Activated CD4-positive, alpha-beta T cell treated with anti-CD3 and anti-CD28 coated beads for 36 hours (primary cell): ENCODE measurements at regions of chr1 and their contacts with region 1.

Region 1: GRCh38 chr1:1115786-1116700 is at the start of gene C1orf159:
- DNase-seq: peak; percentile 99
- ATAC-seq: peak; percentile 96
- H3K4me3 Mint-ChIP-seq: peak within 1 kb of the TSS; percentile 76
- H3K27ac Mint-ChIP-seq: peak within 1 kb of the TSS; percentile 25
- H3K4me1 Mint-ChIP-seq: peaks cover 11% of the 10 kb centered on the region
- H3K27me3 Mint-ChIP-seq: peaks cover 3% of the 10 kb centered on the region
- total RNA-seq, gene C1orf159: 11.3 to 13.5 TPM

Region 2: GRCh38 chr1:1019122-1019999 is 96.7 kb before region 1 on chr1:
- CTCF ChIA-PET with region 1: no interaction called
- POLR2A ChIA-PET with region 1: no interaction called
- intact Hi-C with region 1: loop called in 1 of 2 experiments (anchors 1 kb)
- DNase-seq: peak; percentile 90
- ATAC-seq: peak; percentile 75
- H3K4me3 Mint-ChIP-seq: peak overlapping the region; percentile 59
- H3K27ac Mint-ChIP-seq: no peak overlapping the region
- H3K4me1 Mint-ChIP-seq: peaks cover 15% of the 10 kb centered on the region
- H3K27me3 Mint-ChIP-seq: peaks cover 9% of the 10 kb centered on the region

Region 3: GRCh38 chr1:1069061-1069708 is 46.9 kb before region 1 on chr1:
- CTCF ChIA-PET with region 1: interaction called, 3 read pairs
- POLR2A ChIA-PET with region 1: no interaction called
- intact Hi-C with region 1: loop called (anchors 1 kb)
- DNase-seq: peak; percentile 94
- ATAC-seq: peak; percentile 47
- H3K4me3 Mint-ChIP-seq: peak overlapping the region; percentile 71
- H3K27ac Mint-ChIP-seq: no peak overlapping the region
- H3K4me1 Mint-ChIP-seq: peaks cover 11% of the 10 kb centered on the region
- H3K27me3 Mint-ChIP-seq: no peaks in the 10 kb centered on the region

Region 4: DNA sequence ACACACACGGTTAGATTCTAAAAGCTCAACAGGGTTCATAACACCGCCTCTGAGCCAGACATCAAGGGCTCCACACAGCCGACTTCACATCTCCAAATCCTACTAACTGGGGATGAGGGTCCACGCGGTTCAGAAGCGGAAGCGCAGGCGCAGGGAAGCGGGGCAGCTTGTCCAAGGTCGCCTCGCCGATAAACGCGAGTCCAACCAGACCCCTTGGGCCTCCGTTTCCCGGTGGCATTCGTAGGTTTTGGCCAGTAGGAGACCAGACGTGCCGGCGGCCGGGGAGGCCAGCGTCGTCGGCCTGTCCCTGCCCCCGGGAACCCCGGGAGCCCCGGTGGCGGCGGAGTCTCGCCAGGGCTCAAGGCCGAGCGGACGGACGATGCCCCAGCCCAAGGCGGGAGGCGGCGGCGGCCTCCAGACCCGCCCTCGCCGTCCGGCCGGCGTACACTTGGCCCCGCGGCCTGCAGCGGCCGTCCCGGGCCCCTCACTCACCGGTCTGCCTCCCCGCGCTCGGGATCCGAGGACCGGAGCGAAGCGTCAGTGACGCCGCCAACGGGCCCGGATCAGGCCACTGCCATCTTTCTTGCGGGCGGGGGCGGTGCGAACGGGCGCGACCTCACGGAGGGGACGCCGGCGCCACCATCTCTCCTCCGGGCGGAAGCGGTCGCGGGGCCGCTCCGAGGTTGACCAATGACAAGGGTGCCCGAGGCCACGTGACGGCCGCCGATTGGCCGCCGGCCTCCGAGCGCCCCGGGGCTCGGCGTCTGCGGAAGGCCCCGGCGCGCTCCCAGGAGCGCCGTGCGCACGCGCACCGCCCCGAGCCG is 115.6 kb after region 1 on chr1 and contains the start of gene SDF4:
- CTCF ChIA-PET with region 1: no interaction called
- POLR2A ChIA-PET with region 1: no interaction called
- intact Hi-C with region 1: loop called (anchors 1 to 2 kb)
- DNase-seq: peak; percentile 98
- ATAC-seq: peak; percentile 98
- H3K4me3 Mint-ChIP-seq: peak within 1 kb of the TSS; percentile 94
- H3K27ac Mint-ChIP-seq: peak within 1 kb of the TSS; percentile 91
- H3K4me1 Mint-ChIP-seq: peaks cover 35% of the 10 kb centered on the region
- H3K27me3 Mint-ChIP-seq: no peaks in the 10 kb centered on the region
- total RNA-seq, gene SDF4: 108 to 128 TPM

Region 5: DNA sequence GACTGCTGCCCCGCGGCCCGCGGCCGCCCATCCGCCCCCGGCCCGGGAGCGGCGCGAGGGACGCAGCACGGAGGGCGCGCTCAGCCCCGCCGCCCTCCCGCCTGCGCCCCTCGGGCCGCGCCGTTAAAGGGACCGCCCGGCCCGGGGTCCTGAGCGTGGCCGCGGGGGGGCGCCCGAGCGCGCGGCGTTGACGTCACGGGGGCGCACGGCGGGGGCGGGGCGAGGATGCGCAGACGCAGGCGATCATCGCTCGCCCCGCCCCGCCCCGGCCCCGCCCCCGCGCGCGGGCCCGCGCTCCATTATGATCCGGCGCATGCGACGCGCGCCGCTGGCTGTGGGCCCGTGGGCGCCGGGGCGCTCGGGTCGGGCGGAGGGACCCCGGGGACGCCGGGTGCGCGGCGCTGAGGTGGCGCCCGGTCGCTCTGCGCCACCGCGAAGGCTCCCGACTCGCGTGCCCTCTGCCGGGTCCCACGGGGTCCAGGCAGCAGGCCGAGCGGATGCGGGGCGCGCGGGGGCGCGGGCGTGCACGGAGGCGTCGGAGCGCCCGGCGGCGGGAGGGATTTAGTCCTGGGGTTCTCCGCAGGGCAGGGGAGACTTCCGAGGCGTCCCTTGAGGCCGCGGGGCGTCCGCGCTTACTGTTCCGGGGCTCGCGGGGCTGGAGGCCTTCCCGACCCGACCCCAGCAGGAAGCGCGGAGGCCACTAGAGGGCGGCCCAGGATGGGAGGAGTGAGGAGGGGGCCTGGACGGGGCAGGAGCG is 233.4 kb after region 1 on chr1 and contains the start of gene DVL1:
- CTCF ChIA-PET with region 1: interaction called, 3 read pairs
- POLR2A ChIA-PET with region 1: no interaction called
- intact Hi-C with region 1: loop called in 1 of 2 experiments (anchors 1 kb)
- DNase-seq: peak; percentile 81
- ATAC-seq: peak; percentile 71
- H3K4me3 Mint-ChIP-seq: peak within 1 kb of the TSS; percentile 74
- H3K27ac Mint-ChIP-seq: no peak within 1 kb of the TSS
- H3K4me1 Mint-ChIP-seq: peaks cover 25% of the 10 kb centered on the region
- H3K27me3 Mint-ChIP-seq: peaks cover 11% of the 10 kb centered on the region
- total RNA-seq, gene DVL1: 35.3 to 35.5 TPM

Region 6: DNA sequence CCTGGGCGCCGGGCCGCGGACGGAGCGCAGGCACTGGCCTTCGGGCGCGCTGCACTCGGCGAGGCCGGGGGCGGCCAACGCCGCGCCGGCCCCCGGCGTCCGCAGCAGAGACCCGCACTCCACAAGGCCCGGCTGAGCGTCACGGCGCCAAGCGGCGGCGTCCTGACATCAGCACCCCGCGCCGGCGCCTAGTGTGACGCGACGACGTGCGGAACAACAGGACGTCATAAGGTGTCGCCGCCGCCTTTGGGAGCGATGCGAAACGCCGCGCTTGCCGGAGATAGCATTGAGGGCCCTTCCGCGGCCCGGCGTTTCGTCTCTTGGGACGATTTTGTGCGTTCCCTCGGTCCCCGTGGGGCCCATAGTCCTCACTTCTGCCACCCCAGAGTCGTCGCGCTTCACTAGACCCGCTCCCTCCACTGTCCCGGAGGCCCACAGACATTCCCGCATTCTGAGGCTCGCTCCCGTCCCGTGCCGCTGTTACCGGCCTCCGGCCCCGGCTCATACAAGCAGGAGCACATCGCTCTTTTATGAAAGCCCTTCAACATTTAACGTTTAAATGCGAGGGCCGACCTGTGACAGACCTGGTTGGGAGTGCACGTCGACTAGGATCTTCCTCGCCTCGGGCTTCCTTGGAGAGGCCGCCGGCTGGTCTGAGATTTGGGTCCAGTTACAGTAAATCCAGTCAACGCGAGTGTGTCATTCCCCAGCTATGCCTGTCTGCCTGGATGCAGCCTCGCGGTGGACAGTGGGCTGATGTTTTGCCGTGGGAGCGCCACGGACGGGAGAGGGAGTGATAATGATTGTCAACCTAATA is 458.9 kb after region 1 on chr1 and contains the start of gene SSU72:
- CTCF ChIA-PET with region 1: no interaction called
- POLR2A ChIA-PET with region 1: no interaction called
- intact Hi-C with region 1: loop called in 1 of 2 experiments (anchors 1 kb)
- DNase-seq: peak; percentile 97
- ATAC-seq: peak; percentile 84
- H3K4me3 Mint-ChIP-seq: peak within 1 kb of the TSS; percentile 99
- H3K27ac Mint-ChIP-seq: peak within 1 kb of the TSS; percentile 98
- H3K4me1 Mint-ChIP-seq: peaks cover 28% of the 10 kb centered on the region
- H3K27me3 Mint-ChIP-seq: no peaks in the 10 kb centered on the region
- total RNA-seq, gene SSU72: 105 to 123 TPM